AG04449 (cell line): ENCODE measurements at regions of chr3 and their contacts with region 1.

Region 1: GRCh38 chr3:62665598-62666437 is 209.4 kb downstream of the CADPS start:
- DNase-seq: no peak
- H3K4me3 ChIP-seq: no peak overlapping the region
- CTCF ChIP-seq: peak; percentile 51

Region 2: DNA sequence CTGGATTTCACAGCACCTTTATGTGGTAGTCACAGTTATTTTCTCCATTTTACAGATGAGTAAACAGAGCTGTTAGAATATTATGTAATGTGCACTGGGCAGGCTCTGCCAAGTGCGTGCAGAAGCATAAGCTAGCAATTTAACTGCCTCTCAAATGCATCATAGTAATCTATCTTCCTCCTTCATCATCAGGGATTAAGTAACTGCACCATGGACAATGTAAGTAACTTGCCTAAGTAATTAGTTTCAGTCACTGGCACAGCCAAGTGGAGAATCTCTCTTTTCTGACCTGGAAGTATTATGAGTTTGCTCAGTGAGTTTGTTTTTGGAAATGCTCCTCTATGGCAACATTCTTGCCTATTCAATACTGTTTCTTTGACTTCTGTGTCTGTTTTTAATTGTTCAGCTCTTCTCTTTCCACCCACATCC is 844.0 kb before region 1 on chr3:
- CTCF ChIA-PET with region 1: no interaction called
- POLR2A ChIA-PET with region 1: no interaction called
- DNase-seq: peak; percentile 45
- H3K4me3 ChIP-seq: no peak overlapping the region
- CTCF ChIP-seq: no peak

Region 3: GRCh38 chr3:63193629-63194028 is 527.8 kb after region 1 on chr3:
- CTCF ChIA-PET with region 1: interaction called, 62 read pairs
- POLR2A ChIA-PET with region 1: no interaction called
- DNase-seq: no peak
- H3K4me3 ChIP-seq: no peak overlapping the region
- CTCF ChIP-seq: peak; percentile 37

Region 4: DNA sequence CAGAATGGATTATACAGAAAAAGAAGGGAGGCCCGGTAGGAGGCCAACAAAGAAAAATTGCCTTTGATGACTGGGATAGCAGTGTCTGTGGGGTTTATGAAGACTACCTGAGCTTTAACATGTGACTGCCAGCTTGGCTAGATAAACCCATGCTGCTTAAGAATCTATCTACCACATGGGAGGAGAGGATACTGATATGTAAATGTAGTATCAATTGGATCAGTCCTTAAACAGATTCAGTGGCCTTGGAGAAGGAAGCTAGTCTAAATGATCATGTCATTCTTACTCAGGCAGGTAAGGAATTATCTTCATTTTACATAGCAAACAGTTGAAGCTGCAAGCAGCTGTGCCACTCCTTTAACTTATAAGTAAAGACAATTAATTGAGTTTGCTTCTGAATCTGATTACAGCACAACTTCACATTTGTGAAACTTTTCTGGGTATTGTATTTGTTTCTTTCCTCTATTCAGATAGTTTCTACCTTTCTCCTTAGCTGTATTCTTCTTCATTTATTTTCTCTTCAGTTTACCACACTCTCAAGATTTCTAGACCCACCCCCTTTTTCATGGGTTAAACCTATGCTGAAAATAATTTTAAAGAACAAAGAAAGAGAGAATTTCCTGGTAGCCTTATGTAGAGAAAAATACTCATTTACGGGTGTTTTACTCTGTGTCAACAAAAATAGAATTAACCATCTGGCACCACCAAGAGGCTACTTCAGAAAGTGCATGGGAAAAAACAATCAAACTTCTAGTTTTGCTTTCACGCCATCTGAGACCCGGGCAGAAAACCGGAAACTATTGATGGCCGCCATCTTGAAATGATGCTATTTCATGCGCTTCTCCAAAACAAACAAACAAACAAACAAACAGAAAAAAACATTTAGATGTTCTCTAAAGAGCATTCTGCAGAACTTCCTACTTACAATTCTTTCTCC is 562.5 kb after region 1 on chr3:
- CTCF ChIA-PET with region 1: interaction called, 17 read pairs
- POLR2A ChIA-PET with region 1: no interaction called
- DNase-seq: no peak
- H3K4me3 ChIP-seq: no peak overlapping the region
- CTCF ChIP-seq: peak; percentile 27